Activated B cell treated with CpG ODN at 0.5 μM for 24 hours (primary cell): ENCODE measurements at regions of chrX and their contacts with region 1.

Region 1: GRCh38 chrX:134388161-134389109 is 71.5 kb upstream of the HPRT1 start:
- DNase-seq: no peak
- ATAC-seq: peak; percentile 100
- H3K4me3 Mint-ChIP-seq: peak overlapping the region; percentile 16
- H3K27ac Mint-ChIP-seq: peak overlapping the region; percentile 76
- H3K4me1 Mint-ChIP-seq: peaks cover 15% of the 10 kb centered on the region
- H3K27me3 Mint-ChIP-seq: no peaks in the 10 kb centered on the region
- CTCF ChIP-seq: no peak

Region 2: DNA sequence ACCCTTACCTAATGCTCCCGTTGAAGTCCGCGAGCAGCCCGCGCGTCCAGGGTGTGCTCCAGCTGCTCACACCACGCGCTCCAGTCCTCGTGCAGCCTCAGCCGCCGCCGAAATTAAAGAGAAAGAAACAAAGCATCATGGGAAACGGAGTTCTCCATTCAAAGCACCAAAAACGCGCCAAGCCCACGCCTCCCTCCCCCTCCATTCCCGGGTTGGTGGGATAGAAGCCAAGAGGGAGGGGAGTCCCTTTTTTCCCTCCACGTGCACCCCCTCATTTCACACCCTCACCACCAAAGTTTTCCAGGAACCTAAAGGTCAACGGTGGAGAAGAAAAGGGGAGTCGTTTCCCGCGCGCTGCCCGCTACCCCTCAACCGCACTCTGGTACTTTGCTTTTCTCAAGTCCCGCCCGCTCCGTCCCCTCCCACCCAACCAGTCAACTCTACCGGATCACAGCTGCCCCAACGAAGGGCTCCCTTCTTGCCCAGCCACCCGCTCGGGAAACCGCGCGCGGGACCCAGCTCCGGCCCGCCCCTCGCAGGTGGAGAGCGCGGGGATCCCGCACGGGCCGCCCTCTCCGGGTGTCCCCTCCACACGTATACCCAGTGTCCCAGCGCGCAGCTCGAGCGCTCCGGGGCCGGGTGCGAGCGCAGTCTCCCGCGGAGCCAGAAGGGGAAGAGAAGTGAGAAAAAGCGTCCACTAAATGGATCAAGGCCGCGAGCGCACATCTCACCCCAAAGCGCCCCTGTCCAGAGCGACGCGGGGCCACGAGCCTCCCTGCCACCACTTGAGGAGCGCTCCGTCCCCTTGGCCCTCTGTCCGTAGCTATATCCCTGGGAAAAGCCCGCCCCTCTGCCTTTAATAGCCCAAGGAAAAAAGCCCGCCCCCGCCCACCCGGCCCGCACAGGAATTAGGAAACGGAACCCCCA is 216.5 kb before region 1 on chrX:
- CTCF ChIA-PET with region 1: no interaction called
- POLR2A ChIA-PET with region 1: no interaction called
- intact Hi-C with region 1: loop called (anchors 5 kb)
- DNase-seq: peak; percentile 27
- ATAC-seq: peak; percentile 56
- H3K4me3 Mint-ChIP-seq: peak overlapping the region; percentile 94
- H3K27ac Mint-ChIP-seq: peak overlapping the region; percentile 63
- H3K4me1 Mint-ChIP-seq: peaks cover 12% of the 10 kb centered on the region
- H3K27me3 Mint-ChIP-seq: no peaks in the 10 kb centered on the region
- CTCF ChIP-seq: no peak

Region 3: DNA sequence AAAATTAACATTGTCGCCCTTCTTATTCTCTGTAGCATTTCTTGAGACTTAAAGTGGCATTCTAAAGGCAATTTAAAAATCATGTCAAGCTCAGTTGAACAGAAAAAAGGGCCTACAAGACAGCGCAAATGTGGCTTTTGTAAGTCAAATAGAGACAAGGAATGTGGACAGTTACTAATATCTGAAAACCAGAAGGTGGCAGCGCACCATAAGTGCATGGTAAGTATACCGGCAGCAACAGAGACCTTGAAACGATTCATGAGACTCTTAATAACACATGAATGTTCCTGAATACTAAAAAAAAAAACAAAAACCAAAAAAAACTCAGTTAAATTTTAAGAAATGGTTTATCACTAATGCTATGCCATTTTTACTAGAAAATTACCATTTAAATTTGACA is 10.9 kb before region 1 on chrX:
- CTCF ChIA-PET with region 1: interaction called, 11 read pairs
- POLR2A ChIA-PET with region 1: interaction called, 3 read pairs
- intact Hi-C with region 1: loop called (anchors 1 kb)
- DNase-seq: no peak
- ATAC-seq: no peak
- H3K4me3 Mint-ChIP-seq: no peak overlapping the region
- H3K27ac Mint-ChIP-seq: no peak overlapping the region
- H3K4me1 Mint-ChIP-seq: peaks cover 29% of the 10 kb centered on the region
- H3K27me3 Mint-ChIP-seq: no peaks in the 10 kb centered on the region
- CTCF ChIP-seq: no peak

Region 4: GRCh38 chrX:134431894-134432293 is 43.5 kb after region 1 on chrX:
- CTCF ChIA-PET with region 1: no interaction called
- POLR2A ChIA-PET with region 1: no interaction called
- intact Hi-C with region 1: no loop called
- DNase-seq: no peak
- ATAC-seq: no peak
- H3K4me3 Mint-ChIP-seq: no peak overlapping the region
- H3K27ac Mint-ChIP-seq: no peak overlapping the region
- H3K4me1 Mint-ChIP-seq: no peaks in the 10 kb centered on the region
- H3K27me3 Mint-ChIP-seq: no peaks in the 10 kb centered on the region
- CTCF ChIP-seq: no peak

Region 5: GRCh38 chrX:134542485-134542884 is 154.1 kb after region 1 on chrX:
- CTCF ChIA-PET with region 1: no interaction called
- POLR2A ChIA-PET with region 1: no interaction called
- intact Hi-C with region 1: no loop called
- DNase-seq: no peak
- ATAC-seq: no peak
- H3K4me3 Mint-ChIP-seq: no peak overlapping the region
- H3K27ac Mint-ChIP-seq: no peak overlapping the region
- H3K4me1 Mint-ChIP-seq: peaks cover 5% of the 10 kb centered on the region
- H3K27me3 Mint-ChIP-seq: peaks cover 17% of the 10 kb centered on the region
- CTCF ChIP-seq: no peak